MCF 10A (cell line): ENCODE measurements at regions of chr11 and their contacts with region 1.

Region 1: DNA sequence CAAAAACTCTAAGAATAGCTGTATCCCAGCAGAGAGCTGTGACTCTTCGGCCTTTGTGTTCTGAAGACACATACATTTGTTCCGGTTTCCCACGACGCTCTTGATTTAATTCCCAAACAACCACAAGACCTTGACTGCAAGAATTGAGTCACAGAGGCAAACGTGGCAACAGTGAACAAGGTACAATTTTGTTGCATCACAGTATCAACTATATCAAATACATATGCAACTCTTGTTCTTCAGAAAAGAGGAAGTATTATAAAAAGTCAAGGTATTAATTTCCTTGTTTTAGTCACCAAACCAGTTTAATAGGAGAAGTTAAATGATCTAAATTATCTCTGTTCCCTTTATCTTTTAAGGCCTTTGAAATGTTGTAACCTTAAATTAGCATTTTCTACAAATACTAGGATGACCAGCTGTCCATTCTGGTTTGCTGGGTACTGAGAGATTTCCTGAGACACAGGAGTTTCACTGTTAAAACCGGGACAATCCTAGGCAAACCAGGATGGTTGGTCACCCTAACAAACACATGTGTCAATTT is 11.1 kb downstream of the HPS5 start:
- DNase-seq: peak; percentile 88
- H3K4me3 Mint-ChIP-seq: peak overlapping the region; percentile 60
- H3K27ac Mint-ChIP-seq: peak overlapping the region; percentile 96
- H3K4me1 Mint-ChIP-seq: peaks cover 63% of the 10 kb centered on the region
- H3K27me3 Mint-ChIP-seq: no peaks in the 10 kb centered on the region
- CTCF ChIP-seq: no peak

Region 2: GRCh38 chr11:17960091-17960490 is 350.8 kb before region 1 on chr11:
- CTCF ChIA-PET with region 1: no interaction called
- POLR2A ChIA-PET with region 1: no interaction called
- intact Hi-C with region 1: no loop called
- DNase-seq: no peak
- H3K4me3 Mint-ChIP-seq: no peak overlapping the region
- H3K27ac Mint-ChIP-seq: no peak overlapping the region
- H3K4me1 Mint-ChIP-seq: no peaks in the 10 kb centered on the region
- H3K27me3 Mint-ChIP-seq: no peaks in the 10 kb centered on the region
- CTCF ChIP-seq: no peak

Region 3: DNA sequence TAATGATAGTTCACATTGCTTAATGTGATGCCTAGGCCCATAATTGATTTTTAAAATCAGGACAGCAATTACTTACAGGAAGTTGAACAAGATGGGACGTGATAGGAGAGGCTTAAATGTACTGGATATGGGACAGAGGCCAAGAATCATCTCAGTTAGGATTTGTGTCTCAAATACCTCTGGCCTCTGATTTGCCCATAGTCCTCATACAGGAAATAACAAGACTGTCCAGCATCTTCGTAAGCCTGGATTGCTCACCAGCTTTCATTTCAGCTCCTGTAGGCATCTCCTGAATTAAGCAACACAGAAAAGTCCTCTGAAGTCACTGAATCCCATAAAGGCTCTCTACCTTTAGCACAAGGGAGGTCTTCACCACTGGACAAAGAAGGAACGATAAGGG is 178.5 kb before region 1 on chr11 and contains the start of gene MRGPRX3:
- CTCF ChIA-PET with region 1: no interaction called
- POLR2A ChIA-PET with region 1: no interaction called
- intact Hi-C with region 1: no loop called
- DNase-seq: peak; percentile 33
- H3K4me3 Mint-ChIP-seq: no peak within 1 kb of the TSS
- H3K27ac Mint-ChIP-seq: no peak within 1 kb of the TSS
- H3K4me1 Mint-ChIP-seq: no peaks in the 10 kb centered on the region
- H3K27me3 Mint-ChIP-seq: no peaks in the 10 kb centered on the region
- CTCF ChIP-seq: no peak
- total RNA-seq, gene MRGPRX3: 0.34 and 0.79 TPM in 2 replicates

Region 4: GRCh38 chr11:18383388-18384156 is 72.7 kb after region 1 on chr11:
- CTCF ChIA-PET with region 1: interaction called, 4 read pairs
- POLR2A ChIA-PET with region 1: interaction called, 46 read pairs
- intact Hi-C with region 1: no loop called
- DNase-seq: peak; percentile 100
- H3K4me3 Mint-ChIP-seq: peak overlapping the region; percentile 40
- H3K27ac Mint-ChIP-seq: peak overlapping the region; percentile 96
- H3K4me1 Mint-ChIP-seq: peaks cover 21% of the 10 kb centered on the region
- H3K27me3 Mint-ChIP-seq: no peaks in the 10 kb centered on the region
- CTCF ChIP-seq: no peak